Cardiac septum (tissue), 1 donor: ENCODE measurements at regions of chr3 and their contacts with region 1.

Region 1: DNA sequence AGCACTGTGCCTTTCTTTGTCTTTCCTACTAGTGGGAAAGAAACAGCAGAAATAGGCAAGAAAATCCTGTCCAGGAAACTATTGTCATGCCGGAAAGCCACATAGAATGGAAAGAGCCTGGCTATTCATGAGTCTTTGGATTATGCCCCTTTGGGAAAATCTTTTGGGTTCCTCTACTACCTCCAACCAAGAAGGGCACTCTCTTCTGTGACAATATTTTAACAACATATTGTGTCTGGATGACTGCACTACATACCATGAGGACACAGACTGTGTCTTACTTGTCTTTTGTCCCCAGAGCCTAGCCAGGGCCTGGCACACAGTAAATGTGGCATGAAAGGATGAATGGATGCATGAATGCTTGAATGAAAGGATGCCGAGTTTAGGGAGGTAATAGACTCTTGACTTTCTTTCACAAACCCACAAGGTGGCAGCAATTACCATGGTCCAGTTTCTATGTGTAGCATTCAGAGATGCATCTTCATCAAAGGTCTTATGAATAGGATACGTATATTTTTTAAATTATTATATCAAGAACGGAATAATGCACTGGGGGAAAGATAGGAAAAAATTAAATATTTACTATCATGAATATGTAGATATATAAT is 30.3 kb downstream of the ARL14 start:
- DNase-seq: no peak

Region 2: DNA sequence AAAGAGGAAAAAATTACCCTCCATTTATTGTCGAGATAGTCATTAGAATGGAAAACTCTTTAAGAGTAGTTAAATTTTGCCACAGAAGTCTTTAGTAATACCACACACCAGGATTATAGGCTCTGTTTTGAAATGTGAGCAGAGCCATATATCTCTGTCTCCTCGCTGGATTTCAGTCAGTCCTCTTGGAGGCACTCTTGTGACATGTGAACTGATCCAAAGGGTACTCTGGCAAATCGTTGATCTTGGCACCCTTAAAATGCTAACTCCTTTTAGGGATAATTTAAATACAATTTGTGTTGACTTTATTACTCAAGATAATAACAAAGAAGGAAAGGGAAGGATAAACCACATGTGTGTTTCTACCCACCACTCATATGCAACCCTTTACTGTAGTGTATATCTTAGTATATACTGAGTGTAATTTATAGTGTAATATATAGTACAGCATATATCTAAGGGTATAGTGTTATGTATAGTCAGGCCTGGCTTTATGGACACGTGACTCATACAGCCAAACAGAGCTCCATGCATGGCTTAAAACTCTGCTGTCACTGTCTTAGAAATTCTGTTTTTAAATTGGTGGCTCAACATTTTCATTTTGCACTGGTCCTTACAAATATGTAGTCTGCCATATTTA is 129.6 kb before region 1 on chr3:
- intact Hi-C with region 1: loop called (anchors 10 kb)
- DNase-seq: no peak

Region 3: GRCh38 chr3:160588025-160588424 is 119.3 kb before region 1 on chr3:
- intact Hi-C with region 1: no loop called
- DNase-seq: no peak

Region 4: DNA sequence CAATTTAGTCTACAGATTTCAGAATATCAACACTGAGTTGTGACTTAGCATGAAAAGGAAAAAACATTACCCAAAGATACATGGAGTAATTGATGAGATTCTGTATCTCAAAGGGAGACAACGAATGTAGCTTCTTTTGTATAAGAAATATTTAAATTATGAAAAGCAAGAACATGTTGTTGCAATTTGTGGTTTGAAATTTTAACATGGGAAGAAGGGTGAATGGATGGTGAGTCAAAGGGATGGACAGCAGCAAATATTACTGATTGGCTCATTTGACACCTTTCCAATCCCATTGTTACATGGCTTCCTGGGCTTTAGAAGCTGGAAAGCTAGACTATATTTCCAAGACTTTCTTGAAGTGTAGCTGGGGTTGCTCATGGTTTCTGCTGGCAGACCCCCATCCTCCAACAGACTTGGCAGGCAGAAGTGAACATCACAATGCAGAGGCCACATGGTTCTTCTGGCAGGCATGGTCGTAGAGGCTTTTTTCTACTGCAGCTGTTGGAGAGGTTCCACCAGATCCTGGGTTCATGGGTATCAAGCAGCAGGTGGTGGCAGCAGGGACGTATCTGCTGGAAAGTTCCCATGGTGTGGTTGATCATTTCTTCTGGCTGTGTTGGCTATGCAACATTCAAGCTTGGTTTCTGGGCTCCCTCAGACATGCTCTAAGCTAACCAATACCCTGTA is 94.8 kb before region 1 on chr3:
- intact Hi-C with region 1: no loop called
- DNase-seq: no peak

Region 5: GRCh38 chr3:160748231-160748630 is 40.9 kb after region 1 on chr3:
- intact Hi-C with region 1: loop called (anchors 5 kb)
- DNase-seq: no peak

Region 6: DNA sequence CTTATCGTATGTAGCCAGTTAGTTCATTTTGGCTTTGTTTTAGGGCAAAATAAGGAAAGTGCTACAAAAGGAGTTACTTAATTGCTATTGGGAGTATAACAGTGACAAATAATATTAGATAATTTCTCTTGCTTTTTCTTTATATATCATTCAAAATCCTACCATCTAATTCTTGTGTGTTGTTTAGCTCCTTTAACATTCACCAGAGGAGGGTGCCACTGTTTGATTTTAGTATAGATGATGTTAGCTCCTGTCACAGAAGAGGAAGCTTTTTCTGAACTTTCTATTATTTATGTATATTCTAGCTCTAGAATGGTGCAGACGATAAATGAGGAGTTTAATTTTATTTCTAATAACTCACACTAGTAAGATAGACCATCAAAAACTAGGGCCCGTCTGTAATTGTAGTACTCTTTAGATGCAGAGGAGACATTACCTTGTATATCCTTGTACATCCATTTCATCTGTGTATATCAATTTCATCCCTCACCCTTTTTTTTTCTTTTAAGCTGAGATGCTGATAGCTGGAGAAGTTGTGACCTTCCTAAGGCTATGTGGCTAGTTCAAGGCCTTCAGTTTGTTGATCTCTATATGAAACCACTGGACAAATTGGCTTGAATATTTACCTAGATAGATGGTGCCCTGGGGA is 51.8 kb after region 1 on chr3:
- intact Hi-C with region 1: no loop called
- DNase-seq: no peak

Region 7: DNA sequence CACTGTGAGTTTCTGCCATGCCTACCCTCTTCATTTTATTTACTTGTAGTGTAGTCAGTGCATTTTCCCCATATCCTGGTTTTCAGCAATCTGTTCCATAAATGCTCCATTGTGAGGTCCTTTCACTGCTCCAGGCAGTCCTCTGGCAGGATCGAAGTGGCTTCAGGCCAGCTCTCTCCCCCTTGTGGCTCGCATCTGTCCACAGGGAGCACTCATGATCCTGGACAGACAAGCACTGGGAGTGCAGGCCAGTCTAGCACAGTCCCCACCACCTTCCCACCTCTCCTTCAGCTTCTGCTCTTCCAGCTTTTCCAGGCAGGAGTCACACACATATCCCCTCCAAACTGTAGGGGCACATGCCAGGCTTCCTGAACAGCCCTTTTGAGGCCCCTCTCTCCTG is 222.3 kb after region 1 on chr3:
- intact Hi-C with region 1: loop called (anchors 5 kb)
- DNase-seq: peak; percentile 79

Region 8: DNA sequence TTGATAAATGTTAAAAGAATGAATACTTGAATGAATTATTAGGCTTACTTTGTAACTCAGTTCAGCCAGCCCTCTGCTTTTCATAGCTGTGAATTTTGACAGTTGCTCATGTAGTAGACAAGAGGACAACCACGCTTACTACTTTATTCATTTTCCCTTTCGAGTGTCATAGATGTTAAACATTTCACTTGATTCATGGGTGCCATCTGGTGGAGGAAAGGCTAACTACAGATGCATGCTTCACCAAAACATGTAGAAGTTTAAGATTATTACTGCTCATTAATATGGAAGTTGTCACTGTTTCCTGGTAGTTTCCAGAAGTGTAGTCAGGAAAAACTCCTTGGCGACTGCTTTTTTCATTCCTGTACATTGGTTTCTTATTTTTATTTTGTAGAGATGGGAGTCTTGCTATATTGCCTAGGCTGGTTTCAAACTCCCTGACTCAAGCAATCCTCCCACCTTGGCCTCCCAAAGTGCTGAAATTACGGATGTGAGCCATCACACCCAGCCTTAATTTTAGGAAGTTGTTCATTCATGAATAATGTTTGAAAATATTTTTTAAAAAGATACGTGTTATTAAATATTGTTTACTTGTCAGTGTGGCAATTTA is 234.7 kb after region 1 on chr3:
- intact Hi-C with region 1: loop called (anchors 2 kb)
- DNase-seq: no peak

Region 9: GRCh38 chr3:161274719-161275298 is 567.5 kb after region 1 on chr3:
- intact Hi-C with region 1: loop called (anchors 10 kb)
- DNase-seq: no peak

Region 10: GRCh38 chr3:161413127-161413849 is 706.0 kb after region 1 on chr3:
- intact Hi-C with region 1: loop called (anchors 10 kb)
- DNase-seq: peak; percentile 83